Vagina (tissue), 2 donors: ENCODE measurements at regions of chr7 and their contacts with region 1.

Region 1: DNA sequence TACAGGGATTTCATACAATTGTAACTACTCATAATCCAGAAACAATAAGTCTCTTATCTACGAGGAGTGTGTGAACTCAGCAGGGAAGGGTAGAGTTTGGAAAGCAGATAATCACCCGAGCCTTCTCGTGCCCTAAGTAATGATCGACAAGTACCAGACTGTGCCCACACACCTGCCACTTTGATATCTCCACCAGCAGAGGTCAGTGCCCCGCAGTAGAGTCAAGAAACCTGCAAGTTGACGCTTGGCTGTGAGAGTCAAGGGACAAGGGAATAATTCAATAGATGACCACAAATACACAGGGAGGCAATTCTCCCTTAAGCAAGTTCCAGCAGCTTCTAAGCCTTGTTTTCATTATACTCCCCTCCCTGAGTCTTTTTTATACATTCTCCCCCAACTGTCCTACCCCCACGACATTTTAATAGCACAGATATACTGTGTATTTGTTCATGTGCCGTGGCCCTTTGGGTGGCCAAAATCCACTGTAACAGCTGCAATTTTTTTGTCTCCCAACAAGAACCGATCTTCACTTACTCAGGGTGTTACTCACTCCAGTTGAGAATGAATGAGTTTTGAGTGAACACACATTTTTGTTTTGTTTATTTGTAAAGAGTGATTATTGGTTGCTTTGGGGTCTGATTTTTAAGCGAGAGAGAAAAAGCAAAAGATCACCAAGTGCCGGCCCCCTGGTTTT is 106.9 kb upstream of the RHEB start:
- DNase-seq: no peak
- H3K4me3 ChIP-seq: no peak overlapping the region
- H3K27ac ChIP-seq: no peak overlapping the region
- H3K4me1 ChIP-seq: peaks cover 39% of the 10 kb centered on the region
- H3K27me3 ChIP-seq: no peaks in the 10 kb centered on the region
- CTCF ChIP-seq: peak in 1 of 3 experiments; percentile 8
- POLR2A ChIP-seq: no peak

Region 2: DNA sequence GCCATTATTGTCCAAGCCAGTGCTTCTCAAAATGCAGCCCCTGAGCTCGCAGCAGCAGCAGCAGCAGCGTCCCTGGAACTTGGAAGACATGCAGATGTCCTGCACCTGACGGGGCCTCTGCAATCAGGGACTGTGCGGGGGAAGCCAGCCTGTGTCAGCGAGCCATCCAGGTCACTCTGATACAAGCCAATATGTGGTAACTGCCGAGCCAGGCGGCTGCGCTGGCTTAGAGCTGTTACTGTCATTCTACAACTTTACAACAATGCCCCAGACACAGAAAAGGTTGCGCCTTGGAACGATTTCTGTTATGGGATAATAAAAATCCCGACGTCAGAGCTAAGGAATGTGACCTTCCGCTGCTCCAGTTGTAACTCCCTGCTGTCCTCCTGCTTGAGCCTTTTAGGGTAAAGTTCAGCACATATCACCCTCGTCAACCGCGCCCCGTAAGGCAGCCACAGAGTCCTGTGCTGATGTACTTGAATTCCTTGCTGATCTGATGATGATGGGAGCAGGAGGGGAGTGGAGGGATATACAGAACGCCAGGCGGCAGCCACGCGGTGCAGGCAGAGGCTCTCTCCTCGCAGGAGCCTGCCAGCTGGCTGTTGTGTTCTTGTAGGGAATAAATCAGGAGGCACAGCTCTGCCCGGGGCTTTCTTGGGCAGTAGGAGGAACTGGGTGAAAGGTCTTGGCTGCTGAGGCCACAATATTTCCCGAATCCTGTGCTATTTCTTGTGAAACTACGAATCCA is 166.7 kb before region 1 on chr7:
- intact Hi-C with region 1: loop called (anchors 10 kb)
- DNase-seq: peak in 1 of 2 donors; percentile 100
- H3K4me3 ChIP-seq: peak overlapping the region; percentile 1 to 31
- H3K27ac ChIP-seq: peak overlapping the region; percentile 83
- H3K4me1 ChIP-seq: peaks cover 27% of the 10 kb centered on the region
- H3K27me3 ChIP-seq: no peaks in the 10 kb centered on the region
- CTCF ChIP-seq: peak in 1 of 3 experiments; percentile 41
- POLR2A ChIP-seq: no peak

Region 3: GRCh38 chr7:151524845-151525244 is 101.7 kb before region 1 on chr7:
- intact Hi-C with region 1: no loop called
- DNase-seq: no peak
- H3K4me3 ChIP-seq: no peak overlapping the region
- H3K27ac ChIP-seq: no peak overlapping the region
- H3K4me1 ChIP-seq: peaks cover 8% of the 10 kb centered on the region
- H3K27me3 ChIP-seq: no peaks in the 10 kb centered on the region
- CTCF ChIP-seq: no peak
- POLR2A ChIP-seq: no peak